Right cardiac atrium (tissue), 5 donors: ENCODE measurements at regions of chr9 and their contacts with region 1.

Region 1: DNA sequence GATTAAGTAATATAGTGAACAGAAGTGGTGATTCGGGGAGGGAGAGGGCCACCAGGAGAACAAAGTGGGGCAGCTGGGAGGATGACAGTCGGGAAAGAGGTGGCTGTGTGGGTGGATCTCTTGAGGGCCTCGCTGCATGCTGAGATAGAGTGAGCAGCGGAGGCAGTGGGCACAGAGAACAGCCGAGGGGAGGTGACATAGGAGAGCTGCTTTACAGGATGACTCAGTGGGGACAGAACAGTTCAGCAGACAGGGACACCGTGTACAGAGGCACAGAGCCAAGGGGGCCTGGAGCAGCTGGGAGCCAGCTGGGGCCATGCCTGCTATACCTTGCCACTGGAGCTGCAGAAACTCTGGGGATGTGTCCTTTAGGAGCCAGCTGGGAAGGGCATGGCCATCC is 273.9 kb downstream of the GADD45G start:
- DNase-seq: peak; percentile 84 to 91 (median 91)
- ATAC-seq: peak; percentile 86 to 87
- H3K4me3 ChIP-seq: no peak overlapping the region
- H3K27ac ChIP-seq: peak overlapping the region; percentile 97
- H3K4me1 ChIP-seq: peaks cover 25% of the 10 kb centered on the region
- H3K27me3 ChIP-seq: no peaks in the 10 kb centered on the region

Region 2: GRCh38 chr9:89999534-90000370 is 121.1 kb after region 1 on chr9:
- intact Hi-C with region 1: loop called in 1 of 4 experiments (anchors 10 kb)
- DNase-seq: peak; percentile 55 to 88 (median 85)
- ATAC-seq: peak; percentile 86 to 88
- H3K4me3 ChIP-seq: no peak overlapping the region
- H3K27ac ChIP-seq: peak overlapping the region; percentile 84
- H3K4me1 ChIP-seq: peaks cover 19% of the 10 kb centered on the region
- H3K27me3 ChIP-seq: no peaks in the 10 kb centered on the region